AG04449 (cell line): ENCODE measurements at regions of chr1 and their contacts with region 1.

Region 1: GRCh38 chr1:95084317-95085176 is 11.8 kb upstream of the ALG14 start:
- DNase-seq: no peak
- H3K4me3 ChIP-seq: no peak overlapping the region
- CTCF ChIP-seq: peak; percentile 34

Region 2: GRCh38 chr1:95072532-95073419 is 11.8 kb before region 1 on chr1 and contains the start of gene ALG14:
- CTCF ChIA-PET with region 1: interaction called, 17 read pairs
- POLR2A ChIA-PET with region 1: interaction called, 3 read pairs
- DNase-seq: peak; percentile 80
- H3K4me3 ChIP-seq: peak within 1 kb of the TSS; percentile 96
- CTCF ChIP-seq: no peak

Region 3: GRCh38 chr1:95108792-95109191 is 24.2 kb after region 1 on chr1:
- CTCF ChIA-PET with region 1: no interaction called
- POLR2A ChIA-PET with region 1: no interaction called
- DNase-seq: no peak
- H3K4me3 ChIP-seq: no peak overlapping the region
- CTCF ChIP-seq: no peak

Region 4: GRCh38 chr1:95122151-95122697 is 37.7 kb after region 1 on chr1:
- CTCF ChIA-PET with region 1: no interaction called
- POLR2A ChIA-PET with region 1: no interaction called
- DNase-seq: no peak
- H3K4me3 ChIP-seq: no peak overlapping the region
- CTCF ChIP-seq: no peak